ENCODE measurements at regions of chr1 and their contacts with region 1.

Region 1: DNA sequence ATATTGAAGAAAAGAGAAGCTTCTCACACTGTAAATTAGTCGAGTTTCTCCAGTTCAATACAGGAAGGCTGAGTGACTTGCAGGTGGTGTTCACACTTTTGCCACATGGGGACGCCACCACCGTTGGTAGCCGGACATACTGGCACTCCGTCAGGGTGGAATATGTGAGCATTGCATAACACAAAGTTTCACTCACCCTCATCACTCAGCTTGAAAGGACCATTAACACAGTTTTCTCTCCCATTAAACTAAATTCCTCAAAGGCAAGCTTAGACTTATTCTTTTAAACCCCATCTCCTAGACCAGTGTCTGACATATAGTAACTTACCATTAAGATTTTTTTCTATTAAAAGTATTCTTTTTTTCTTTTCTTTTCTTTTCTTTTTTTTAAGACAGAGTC is 105.3 kb upstream of the SERBP1 start:
- DNase-seq: no peak
- ATAC-seq: no peak
- H3K4me3 Mint-ChIP-seq: no peak overlapping the region
- H3K27ac Mint-ChIP-seq: no peak overlapping the region
- H3K4me1 Mint-ChIP-seq: peaks cover 3% of the 10 kb centered on the region
- H3K27me3 Mint-ChIP-seq: peaks cover 12% of the 10 kb centered on the region
- CTCF ChIP-seq: no peak

Region 2: DNA sequence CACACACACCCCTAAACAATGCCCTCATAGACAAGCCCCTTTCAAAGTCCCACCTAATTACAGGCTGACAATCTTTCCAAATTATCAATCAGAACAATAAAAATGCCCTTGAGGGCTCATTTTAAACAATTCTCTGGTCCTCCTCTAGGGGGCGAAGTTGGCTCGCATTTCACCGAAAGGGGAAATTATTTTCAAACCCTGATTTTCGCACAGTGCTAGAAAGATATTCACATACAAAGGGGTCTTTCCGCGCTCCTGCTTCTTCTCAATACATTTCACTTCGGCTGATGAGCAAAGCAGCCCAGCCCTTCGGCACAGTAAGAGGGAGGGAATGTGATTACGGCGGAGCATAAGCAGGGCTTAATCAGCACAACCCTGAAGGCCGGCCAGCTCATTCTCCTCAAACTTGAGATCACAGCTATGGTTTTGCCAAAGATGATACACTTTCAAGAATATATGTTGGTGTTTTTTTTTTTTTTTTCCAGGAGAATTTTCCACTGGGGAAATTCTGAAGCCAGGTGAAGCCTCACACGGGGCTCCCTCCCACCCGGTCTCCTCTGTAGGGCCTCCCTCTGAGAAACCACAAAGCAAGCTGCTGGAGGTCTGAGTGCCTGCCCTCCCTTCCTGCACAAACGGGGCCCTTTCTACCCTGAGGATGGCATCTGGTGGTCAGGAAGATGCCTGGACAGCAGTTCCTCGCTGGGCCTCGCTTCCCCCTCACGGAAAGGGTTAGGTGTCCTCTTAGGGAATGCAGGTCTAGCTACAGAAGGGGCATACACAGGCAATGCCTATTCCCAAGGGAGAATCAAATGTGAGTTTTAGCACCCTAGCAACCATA is 230.9 kb after region 1 on chr1:
- CTCF ChIA-PET with region 1: interaction called, 169 read pairs
- POLR2A ChIA-PET with region 1: no interaction called
- intact Hi-C with region 1: no loop called
- DNase-seq: no peak
- ATAC-seq: peak; percentile 28
- H3K4me3 Mint-ChIP-seq: peak overlapping the region; percentile 36
- H3K27ac Mint-ChIP-seq: no peak overlapping the region
- H3K4me1 Mint-ChIP-seq: peaks cover 8% of the 10 kb centered on the region
- H3K27me3 Mint-ChIP-seq: peaks cover 33% of the 10 kb centered on the region
- CTCF ChIP-seq: no peak

Region 3: DNA sequence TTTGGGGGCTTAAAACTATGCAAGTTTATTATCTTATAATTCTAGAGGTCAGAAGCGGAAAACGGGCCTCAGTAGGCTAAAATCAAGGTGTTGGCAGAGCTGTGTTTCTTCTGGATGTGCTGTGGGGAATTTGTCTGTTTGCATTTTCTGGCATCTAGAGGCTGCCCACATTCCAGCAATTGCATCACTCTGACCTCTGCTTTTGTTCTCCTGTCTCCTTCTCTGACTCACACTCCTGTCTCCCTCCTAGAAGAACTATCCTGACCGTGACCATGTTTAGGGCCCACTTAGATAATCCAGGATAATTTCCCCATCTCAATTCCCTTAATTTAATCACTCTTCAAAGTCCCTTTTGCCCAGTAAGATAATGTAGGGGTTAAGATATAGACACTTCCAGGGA is 1088.8 kb after region 1 on chr1:
- CTCF ChIA-PET with region 1: no interaction called
- POLR2A ChIA-PET with region 1: no interaction called
- intact Hi-C with region 1: no loop called
- DNase-seq: no peak
- ATAC-seq: no peak
- H3K4me3 Mint-ChIP-seq: no peak overlapping the region
- H3K27ac Mint-ChIP-seq: no peak overlapping the region
- H3K4me1 Mint-ChIP-seq: no peaks in the 10 kb centered on the region
- H3K27me3 Mint-ChIP-seq: no peaks in the 10 kb centered on the region
- CTCF ChIP-seq: no peak